ENCODE measurements at regions of chr12 and their contacts with region 1.

Region 1: GRCh38 chr12:2812290-2813213 is at the start of gene ITFG2:
- DNase-seq: peak; percentile 95
- H3K4me3 Mint-ChIP-seq: peak within 1 kb of the TSS; percentile 99
- H3K27ac Mint-ChIP-seq: peak within 1 kb of the TSS; percentile 100
- H3K4me1 Mint-ChIP-seq: peaks cover 23% of the 10 kb centered on the region
- H3K27me3 Mint-ChIP-seq: no peaks in the 10 kb centered on the region
- total RNA-seq, gene ITFG2: 35.1 and 42.2 TPM in 2 replicates

Region 2: GRCh38 chr12:1804545-1805332 is 1007.8 kb before region 1 on chr12:
- intact Hi-C with region 1: loop called (anchors 1 kb)
- DNase-seq: peak; percentile 80
- H3K4me3 Mint-ChIP-seq: no peak overlapping the region
- H3K27ac Mint-ChIP-seq: peak overlapping the region; percentile 18
- H3K4me1 Mint-ChIP-seq: peaks cover 7% of the 10 kb centered on the region
- H3K27me3 Mint-ChIP-seq: peaks cover 2% of the 10 kb centered on the region

Region 3: DNA sequence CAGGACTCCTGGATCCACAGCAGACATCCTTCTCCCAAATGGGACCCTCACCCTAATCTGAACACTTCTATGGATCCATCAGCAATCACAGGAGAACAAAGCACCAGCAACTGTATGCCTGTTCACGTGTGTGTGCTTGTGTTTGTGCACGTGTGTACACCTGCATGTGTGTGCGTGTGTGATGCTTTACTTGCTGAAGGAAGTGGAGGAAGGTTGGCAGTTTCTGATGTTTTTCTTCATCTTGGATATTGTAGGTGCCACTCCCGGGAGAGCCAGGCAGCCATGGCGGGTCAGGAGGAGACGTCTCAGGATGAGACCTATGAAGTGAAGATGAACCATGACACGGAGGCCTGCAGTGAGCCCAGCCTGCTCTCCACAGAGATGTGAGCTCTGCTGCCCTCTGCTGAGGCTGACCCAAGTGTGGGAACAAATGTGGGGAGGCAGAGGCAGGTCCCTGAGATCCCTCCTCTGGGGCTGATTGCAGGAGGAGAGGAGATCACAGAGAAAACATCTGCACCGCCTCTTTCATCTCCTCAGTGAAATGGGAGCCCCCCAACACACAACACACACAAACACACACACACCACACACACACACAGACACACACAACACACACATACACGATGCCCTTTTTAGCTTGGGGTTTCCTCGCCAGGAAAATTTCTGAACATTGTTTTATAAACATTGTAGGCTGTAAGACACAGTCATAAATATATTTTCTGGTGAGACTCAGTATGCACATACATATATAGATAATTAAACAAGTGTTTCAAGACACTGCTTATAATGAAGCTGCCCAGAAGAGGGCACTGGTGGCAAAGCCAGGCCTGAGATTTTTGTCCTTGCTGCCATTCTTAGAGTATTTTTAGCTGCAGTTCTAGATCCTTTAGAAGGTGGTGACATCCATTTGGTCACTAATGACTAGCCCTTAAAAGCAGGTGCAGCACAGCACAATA is 130.0 kb before region 1 on chr12:
- intact Hi-C with region 1: loop called (anchors 1 kb)
- DNase-seq: peak; percentile 31
- H3K4me3 Mint-ChIP-seq: no peak overlapping the region
- H3K27ac Mint-ChIP-seq: peak overlapping the region; percentile 77
- H3K4me1 Mint-ChIP-seq: peaks cover 7% of the 10 kb centered on the region
- H3K27me3 Mint-ChIP-seq: no peaks in the 10 kb centered on the region

Region 4: GRCh38 chr12:2752676-2753371 is 59.7 kb before region 1 on chr12:
- intact Hi-C with region 1: loop called (anchors 1 kb)
- DNase-seq: peak; percentile 78
- H3K4me3 Mint-ChIP-seq: no peak overlapping the region
- H3K27ac Mint-ChIP-seq: no peak overlapping the region
- H3K4me1 Mint-ChIP-seq: no peaks in the 10 kb centered on the region
- H3K27me3 Mint-ChIP-seq: peaks cover 18% of the 10 kb centered on the region

Region 5: DNA sequence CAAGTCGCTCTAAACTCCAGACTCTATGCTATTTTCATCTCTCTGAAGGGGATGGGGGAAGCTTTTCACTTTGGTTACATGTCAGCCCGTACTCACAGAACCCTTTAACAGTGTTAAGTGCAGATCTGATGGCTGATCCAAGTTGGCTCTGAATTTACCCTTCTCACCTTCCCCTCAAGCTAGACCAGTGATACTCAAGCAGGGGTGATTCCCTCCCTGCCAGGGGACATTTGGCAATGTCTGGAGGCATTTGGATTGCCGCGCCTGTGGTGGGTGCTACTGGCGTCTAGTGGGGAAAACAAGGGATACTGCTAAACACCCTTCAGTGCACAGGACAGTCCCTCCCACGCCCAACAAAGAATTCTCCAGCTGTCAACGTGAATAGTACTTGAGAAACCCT is 50.3 kb after region 1 on chr12:
- intact Hi-C with region 1: loop called (anchors 2 kb)
- DNase-seq: no peak
- H3K4me3 Mint-ChIP-seq: no peak overlapping the region
- H3K27ac Mint-ChIP-seq: no peak overlapping the region
- H3K4me1 Mint-ChIP-seq: peaks cover 15% of the 10 kb centered on the region
- H3K27me3 Mint-ChIP-seq: no peaks in the 10 kb centered on the region

Region 6: DNA sequence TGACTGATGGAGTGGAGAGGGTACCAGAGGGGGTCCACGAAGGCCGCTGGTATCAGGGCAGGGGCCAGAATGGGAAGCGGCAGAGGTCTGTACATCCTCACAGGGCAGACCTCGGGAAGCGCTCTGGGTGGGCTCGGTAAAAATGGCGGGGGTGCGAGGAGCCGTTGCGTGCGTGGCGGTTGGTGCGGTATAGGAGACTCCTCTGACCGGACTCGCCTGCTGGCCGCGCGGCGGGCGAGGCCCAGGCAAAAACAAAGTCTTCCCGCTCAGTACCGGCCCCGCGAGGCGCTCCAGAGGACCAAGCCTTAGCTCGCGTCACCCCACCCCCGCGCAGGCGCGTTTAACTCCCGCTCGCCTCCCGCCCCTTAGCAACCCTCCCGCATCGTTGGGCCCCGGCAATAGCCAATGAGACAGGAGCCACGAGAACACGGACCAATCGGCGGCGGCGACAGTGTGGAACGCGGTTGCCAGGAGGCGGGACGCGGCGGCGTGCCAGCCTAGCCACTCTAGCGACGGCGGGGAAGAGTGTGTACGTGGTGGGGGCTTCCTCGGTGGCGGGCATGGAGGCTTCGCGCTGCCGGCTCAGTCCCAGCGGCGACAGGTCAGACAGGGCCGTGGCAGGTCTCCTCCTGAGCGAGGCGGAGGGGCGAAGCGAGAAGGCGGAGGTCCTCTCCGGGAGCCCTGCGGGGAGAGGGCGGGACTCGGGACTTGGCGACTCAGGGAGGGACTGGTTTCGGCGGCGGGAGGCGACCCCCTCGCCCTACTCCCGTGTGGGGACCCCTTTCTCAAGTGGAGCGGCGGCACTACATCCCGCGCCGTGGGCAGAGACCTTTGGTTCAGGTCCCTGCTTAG is 78.1 kb after region 1 on chr12 and contains the start of gene TULP3:
- intact Hi-C with region 1: loop called (anchors 1 kb)
- DNase-seq: peak; percentile 97
- H3K4me3 Mint-ChIP-seq: peak within 1 kb of the TSS; percentile 91
- H3K27ac Mint-ChIP-seq: peak within 1 kb of the TSS; percentile 88
- H3K4me1 Mint-ChIP-seq: peaks cover 27% of the 10 kb centered on the region
- H3K27me3 Mint-ChIP-seq: no peaks in the 10 kb centered on the region
- total RNA-seq, gene TULP3: 7.9 and 8.6 TPM in 2 replicates

Region 7: GRCh38 chr12:3073438-3074250 is 261.1 kb after region 1 on chr12:
- intact Hi-C with region 1: loop called (anchors 2 kb)
- DNase-seq: peak; percentile 71
- H3K4me3 Mint-ChIP-seq: peak overlapping the region; percentile 15
- H3K27ac Mint-ChIP-seq: no peak overlapping the region
- H3K4me1 Mint-ChIP-seq: peaks cover 10% of the 10 kb centered on the region
- H3K27me3 Mint-ChIP-seq: peaks cover 27% of the 10 kb centered on the region

Region 8: GRCh38 chr12:4460761-4461160 is 1648.2 kb after region 1 on chr12:
- intact Hi-C with region 1: no loop called
- DNase-seq: no peak
- H3K4me3 Mint-ChIP-seq: no peak overlapping the region
- H3K27ac Mint-ChIP-seq: no peak overlapping the region
- H3K4me1 Mint-ChIP-seq: no peaks in the 10 kb centered on the region
- H3K27me3 Mint-ChIP-seq: peaks cover 13% of the 10 kb centered on the region